Gastrocnemius medialis (tissue), 4 donors: ENCODE measurements at regions of chr6 and their contacts with region 1.

Region 1: GRCh38 chr6:63571881-63572732 is at the starts of genes LOC128125822 and PTP4A1:
- DNase-seq: peak; percentile 95 to 97
- ATAC-seq: peak; percentile 74
- H3K4me3 ChIP-seq: peak within 1 kb of the TSS; percentile 87 to 99 (median 96)
- H3K27ac ChIP-seq: peak within 1 kb of the TSS; percentile 99 to 100 (median 100)
- H3K4me1 ChIP-seq: peaks cover 0 to 34% of the 10 kb centered on the region in 2 donors
- H3K27me3 ChIP-seq: no peaks in the 10 kb centered on the region
- CTCF ChIP-seq: peak in 1 of 5 experiments; percentile 14
- POLR2A ChIP-seq: peak; percentile 99 to 100
- total RNA-seq, gene PTP4A1: 30.6 to 256 (median 90.8) TPM

Region 2: GRCh38 chr6:63352587-63353285 is 219.4 kb before region 1 on chr6:
- in situ Hi-C with region 1: no loop called
- intact Hi-C with region 1: loop called (anchors 2 kb)
- DNase-seq: peak in 1 of 2 donors; percentile 10
- ATAC-seq: peak; percentile 81 to 83
- H3K4me3 ChIP-seq: peak overlapping the region in 1 of 4 donors; percentile 12
- H3K27ac ChIP-seq: peak overlapping the region in 1 of 4 donors; percentile 10
- H3K4me1 ChIP-seq: peaks cover 0 to 11% of the 10 kb centered on the region in 2 donors
- H3K27me3 ChIP-seq: no peaks in the 10 kb centered on the region
- CTCF ChIP-seq: peak; percentile 38 to 73 (median 56)
- POLR2A ChIP-seq: no peak

Region 3: DNA sequence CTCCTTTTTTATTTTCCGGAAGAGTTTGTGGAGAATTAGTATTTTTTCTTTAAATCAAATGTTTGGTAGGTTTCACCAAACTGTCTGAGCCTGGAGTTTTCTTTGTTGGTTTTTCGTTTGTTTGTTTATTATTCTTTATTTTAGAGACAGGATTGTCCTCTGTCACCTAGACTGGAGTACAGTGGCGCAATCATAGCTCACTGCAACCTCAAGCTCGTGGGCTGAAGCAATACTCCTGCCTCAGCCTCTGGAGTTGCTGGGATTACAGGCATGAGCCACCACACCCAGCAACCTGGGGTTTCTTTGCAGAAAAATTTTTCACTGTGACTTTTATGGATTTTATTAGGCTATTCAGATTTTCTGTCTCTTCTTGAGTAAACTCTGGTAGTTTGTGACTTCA is 120.0 kb before region 1 on chr6:
- in situ Hi-C with region 1: no loop called
- intact Hi-C with region 1: loop called (anchors 1 kb)
- DNase-seq: peak; percentile 31 to 50
- ATAC-seq: peak; percentile 72 to 80
- H3K4me3 ChIP-seq: no peak overlapping the region
- H3K27ac ChIP-seq: peak overlapping the region; percentile 17 to 58 (median 44)
- H3K4me1 ChIP-seq: peaks cover 16 to 26% of the 10 kb centered on the region in 2 donors
- H3K27me3 ChIP-seq: no peaks in the 10 kb centered on the region
- CTCF ChIP-seq: no peak
- POLR2A ChIP-seq: no peak

Region 4: DNA sequence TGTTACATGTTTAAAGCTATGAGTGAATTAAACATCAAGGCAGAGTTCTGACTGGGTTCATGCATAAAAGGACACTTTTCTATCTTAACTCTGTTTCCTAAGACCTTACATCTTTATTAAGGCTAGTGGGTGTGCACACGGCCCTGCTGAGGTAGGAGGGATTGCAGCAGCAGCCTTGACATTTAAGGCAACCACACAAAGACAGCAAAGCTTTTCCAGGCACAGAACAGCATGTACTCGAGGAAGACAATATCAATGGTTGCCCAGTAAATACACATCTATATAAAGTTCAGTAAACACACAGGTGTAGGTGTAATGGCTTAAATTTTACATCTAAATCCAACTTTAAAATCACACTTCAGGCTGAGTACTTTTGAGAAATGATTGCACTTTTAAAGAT is 79.6 kb before region 1 on chr6:
- in situ Hi-C with region 1: no loop called
- intact Hi-C with region 1: loop called (anchors 5 kb)
- DNase-seq: peak; percentile 29 to 57
- ATAC-seq: peak; percentile 96 to 97
- H3K4me3 ChIP-seq: no peak overlapping the region
- H3K27ac ChIP-seq: peak overlapping the region; percentile 25 to 80 (median 70)
- H3K4me1 ChIP-seq: peaks cover 16% of the 10 kb centered on the region in 2 donors
- H3K27me3 ChIP-seq: no peaks in the 10 kb centered on the region
- CTCF ChIP-seq: no peak
- POLR2A ChIP-seq: no peak

Region 5: DNA sequence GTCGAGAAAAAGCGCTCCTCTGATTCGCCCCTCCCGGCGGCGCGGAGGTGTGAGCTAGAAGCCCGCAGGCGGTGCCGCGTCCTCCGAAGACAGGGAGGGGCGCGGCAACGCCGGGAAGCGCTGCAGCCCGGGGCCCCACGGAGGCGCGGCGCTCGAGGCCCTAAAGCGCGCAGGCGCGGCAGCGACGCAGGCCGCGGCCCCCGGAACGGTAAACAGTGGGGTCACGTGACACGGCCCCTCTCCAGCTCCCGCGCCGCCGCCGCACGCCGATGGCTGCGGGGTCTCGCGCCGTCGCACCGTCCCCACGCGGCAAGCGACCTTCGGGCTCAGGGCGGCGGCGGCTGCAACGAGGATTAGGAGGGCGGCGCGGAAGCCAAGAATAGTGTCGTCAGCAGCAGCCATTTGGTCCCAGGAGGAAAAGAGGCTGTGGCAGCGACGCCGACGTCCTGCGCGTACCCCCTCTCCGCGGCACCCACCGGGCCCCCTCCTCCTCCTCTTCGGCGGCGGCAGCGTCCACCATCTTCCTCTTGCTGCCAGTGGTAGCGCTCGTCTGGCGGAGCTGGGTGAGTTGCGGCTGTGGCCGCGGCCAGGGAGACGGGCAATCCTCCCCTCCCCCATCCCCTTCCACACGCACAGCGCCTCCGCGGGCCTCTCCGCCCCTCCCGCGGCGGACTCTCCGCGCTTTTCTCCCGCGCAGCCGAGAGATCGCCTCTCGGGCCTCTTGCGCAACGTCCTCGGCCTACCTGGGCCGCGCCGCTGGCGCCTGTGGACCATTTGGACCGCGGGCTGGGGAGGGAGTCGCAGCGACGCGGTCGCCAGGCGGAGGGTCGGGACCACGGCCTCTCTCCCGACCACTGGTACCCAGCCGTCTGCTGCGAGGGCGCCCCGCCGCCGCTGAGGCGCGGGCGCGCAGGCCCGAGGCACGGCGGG is 63.7 kb after region 1 on chr6 and contains the start of gene PHF3:
- in situ Hi-C with region 1: loop called in 1 of 4 experiments (anchors 10 kb)
- intact Hi-C with region 1: loop called (anchors 2 kb)
- DNase-seq: peak; percentile 80 to 86
- ATAC-seq: peak; percentile 84 to 85
- H3K4me3 ChIP-seq: peak within 1 kb of the TSS; percentile 76 to 93 (median 83)
- H3K27ac ChIP-seq: peak within 1 kb of the TSS; percentile 92 to 98 (median 96)
- H3K4me1 ChIP-seq: peaks cover 39 to 43% of the 10 kb centered on the region in 2 donors
- H3K27me3 ChIP-seq: no peaks in the 10 kb centered on the region
- CTCF ChIP-seq: peak in 3 of 5 experiments; percentile 24 to 50 (median 29)
- POLR2A ChIP-seq: peak; percentile 44 to 73
- total RNA-seq, gene PHF3: 49.4 to 73.1 (median 61.9) TPM

Region 6: GRCh38 chr6:63663147-63663877 is 91.2 kb after region 1 on chr6:
- in situ Hi-C with region 1: no loop called
- intact Hi-C with region 1: no loop called
- DNase-seq: no peak
- ATAC-seq: peak; percentile 93 to 98
- H3K4me3 ChIP-seq: peak overlapping the region in 2 of 4 donors; percentile 9 to 11
- H3K27ac ChIP-seq: peak overlapping the region; percentile 57 to 77 (median 70)
- H3K4me1 ChIP-seq: peaks cover 43 to 85% of the 10 kb centered on the region in 2 donors
- H3K27me3 ChIP-seq: no peaks in the 10 kb centered on the region
- CTCF ChIP-seq: no peak
- POLR2A ChIP-seq: no peak